ENCODE measurements at regions of chr6 and their contacts with region 1.

Region 1: GRCh38 chr6:31197559-31198305 is 27.2 kb upstream of the POU5F1 start:
- DNase-seq: peak; percentile 95
- H3K4me3 ChIP-seq: peak overlapping the region; percentile 39 to 64 (median 54)
- H3K27ac ChIP-seq: peak overlapping the region; percentile 93 to 96 (median 94)
- H3K4me1 ChIP-seq: peaks cover 10 to 31% (median 20%) of the 10 kb centered on the region in 4 donors
- H3K27me3 ChIP-seq: no peaks in the 10 kb centered on the region
- CTCF ChIP-seq: no peak
- EP300 ChIP-seq: no peak
- POLR2A ChIP-seq: peak; percentile 85

Region 2: DNA sequence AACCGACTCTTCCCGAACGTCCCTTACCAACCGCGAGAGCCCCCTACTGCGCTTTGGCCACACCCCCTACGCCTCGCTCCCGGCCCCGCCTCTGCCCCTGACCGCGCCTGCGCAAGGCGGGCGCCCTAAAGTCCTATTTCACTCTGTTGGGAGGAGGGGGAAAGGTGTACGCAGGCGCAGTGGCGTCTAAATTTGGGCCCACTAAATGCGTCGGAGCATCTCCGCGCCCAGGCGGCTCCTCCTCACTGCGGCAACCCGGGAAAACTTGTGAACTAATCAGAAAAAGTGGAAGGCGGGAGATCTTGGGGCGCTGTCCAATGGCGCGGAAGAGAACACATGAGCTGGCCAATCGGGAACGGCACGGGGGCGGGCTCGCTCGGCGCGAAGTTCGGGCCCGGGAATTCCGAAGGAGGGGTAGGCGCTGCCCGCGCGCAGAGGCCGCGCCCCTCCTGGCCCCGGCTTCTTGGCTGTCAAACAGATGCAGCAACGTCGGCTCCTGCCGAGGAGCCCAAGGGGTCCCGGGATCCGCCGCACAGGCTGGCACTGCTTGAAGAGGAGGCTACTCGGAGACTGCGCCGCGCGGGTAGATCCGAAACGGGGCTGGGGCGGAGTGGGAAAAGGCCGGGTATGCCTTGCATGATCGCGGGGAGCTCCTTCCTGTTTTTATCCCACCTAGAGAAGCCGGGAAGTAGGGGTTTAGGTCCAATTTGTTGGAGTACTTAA is 39.4 kb before region 1 on chr6 and contains the start of gene TCF19:
- in situ Hi-C with region 1: no loop called
- intact Hi-C with region 1: no loop called
- DNase-seq: peak; percentile 99
- H3K4me3 ChIP-seq: peak within 1 kb of the TSS; percentile 56 to 71 (median 63)
- H3K27ac ChIP-seq: peak within 1 kb of the TSS; percentile 80 to 90 (median 86)
- H3K4me1 ChIP-seq: peaks cover 11 to 20% (median 19%) of the 10 kb centered on the region in 4 donors
- H3K27me3 ChIP-seq: no peaks in the 10 kb centered on the region
- CTCF ChIP-seq: no peak
- EP300 ChIP-seq: no peak
- POLR2A ChIP-seq: peak; percentile 14
- total RNA-seq, gene TCF19: 1.6 to 5.2 (median 3.1) TPM

Region 3: DNA sequence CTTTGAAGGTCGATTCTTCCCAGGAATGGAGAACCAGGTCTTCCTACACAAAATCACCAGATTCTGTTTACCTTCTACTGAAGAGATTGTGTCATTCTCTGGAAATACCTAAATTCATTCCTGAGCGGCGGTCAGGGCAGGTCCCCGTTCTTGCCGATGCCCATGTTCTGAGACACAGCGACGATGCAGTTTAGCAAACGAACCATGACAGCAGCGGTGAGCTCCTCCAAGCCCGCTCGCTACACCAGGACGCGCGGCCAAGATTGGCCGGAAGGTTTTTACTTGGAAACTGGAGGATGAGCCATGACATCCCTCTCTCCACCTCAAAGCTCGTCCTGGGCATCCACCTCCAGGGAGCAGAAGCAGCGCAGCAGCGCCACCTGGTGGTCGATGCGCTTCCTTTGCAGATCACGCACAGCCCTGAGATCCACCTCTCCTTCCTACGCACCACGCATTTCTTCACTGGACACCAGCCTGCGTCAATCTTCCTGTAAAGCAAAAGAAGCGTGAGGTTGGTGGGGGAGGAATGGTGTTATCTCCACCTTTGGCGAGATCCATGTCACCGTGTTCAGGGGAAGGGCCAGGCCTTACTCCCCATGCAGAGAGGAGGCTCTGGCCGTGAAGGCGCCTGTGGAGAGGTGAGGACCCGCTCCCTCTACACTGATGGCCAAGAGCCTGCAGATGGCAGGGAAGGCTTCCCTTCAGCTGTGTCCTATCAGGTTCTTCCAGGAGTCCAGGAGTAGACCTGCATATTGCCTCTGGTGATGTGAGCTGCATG is 169.2 kb after region 1 on chr6:
- in situ Hi-C with region 1: loop called (anchors 5 to 10 kb)
- intact Hi-C with region 1: loop called (anchors 5 kb)
- DNase-seq: peak; percentile 90
- H3K4me3 ChIP-seq: peak overlapping the region in 1 of 4 donors; percentile 36
- H3K27ac ChIP-seq: no peak overlapping the region
- H3K4me1 ChIP-seq: peaks cover 0 to 4% (median 2%) of the 10 kb centered on the region in 4 donors
- H3K27me3 ChIP-seq: peaks cover 33% of the 10 kb centered on the region
- CTCF ChIP-seq: peak; percentile 91 to 98 (median 92)
- EP300 ChIP-seq: no peak
- POLR2A ChIP-seq: no peak

Measured in transverse colon (tissue), 4 donors.